Adrenal gland (tissue), 19 donors: ENCODE measurements at regions of chr19 and their contacts with region 1.

Region 1: GRCh38 chr19:33771384-33772101 is 25.1 kb upstream of the KCTD15 start:
- DNase-seq: peak; percentile 46 to 86 (median 74)
- H3K4me3 ChIP-seq: no peak overlapping the region
- H3K27ac ChIP-seq: no peak overlapping the region
- H3K4me1 ChIP-seq: no peaks in the 10 kb centered on the region
- H3K27me3 ChIP-seq: no peaks in the 10 kb centered on the region
- CTCF ChIP-seq: peak; percentile 71 to 92 (median 88)
- POLR2A ChIP-seq: no peak

Region 2: DNA sequence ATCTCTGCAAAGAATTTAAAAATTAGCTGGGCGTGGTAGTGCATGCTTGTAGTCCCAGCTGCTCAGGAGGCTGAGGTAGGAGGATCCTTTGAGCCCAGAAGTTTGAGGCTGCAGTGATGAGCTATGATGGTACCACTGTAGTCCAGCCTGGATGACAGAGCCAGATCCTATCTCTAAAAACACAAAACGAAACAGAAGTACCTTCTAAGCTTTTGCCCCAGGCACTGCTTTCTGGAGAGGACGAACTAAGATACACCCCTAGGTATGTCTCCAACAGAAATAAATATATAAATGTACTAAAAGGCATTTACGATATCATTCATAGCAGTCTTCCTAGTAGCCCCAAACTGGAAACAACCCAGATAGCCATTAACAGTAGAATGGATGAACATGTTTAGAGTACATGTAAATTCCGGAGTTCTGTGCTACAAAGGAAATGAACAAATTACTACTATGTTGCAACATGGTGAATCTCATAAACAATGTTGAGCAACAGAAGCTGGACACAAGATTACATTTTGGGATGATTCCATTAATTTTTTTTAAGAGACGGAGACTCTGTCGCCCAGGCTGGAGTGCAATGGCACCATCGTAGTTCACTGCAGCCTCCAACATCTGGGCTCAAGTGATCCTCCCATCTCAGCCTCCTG is 540.2 kb before region 1 on chr19:
- intact Hi-C with region 1: loop called in 1 of 2 experiments (anchors 5 kb)
- DNase-seq: no peak
- H3K4me3 ChIP-seq: no peak overlapping the region
- H3K27ac ChIP-seq: no peak overlapping the region
- H3K4me1 ChIP-seq: no peaks in the 10 kb centered on the region
- H3K27me3 ChIP-seq: peaks cover 13% of the 10 kb centered on the region
- CTCF ChIP-seq: no peak
- POLR2A ChIP-seq: no peak

Region 3: DNA sequence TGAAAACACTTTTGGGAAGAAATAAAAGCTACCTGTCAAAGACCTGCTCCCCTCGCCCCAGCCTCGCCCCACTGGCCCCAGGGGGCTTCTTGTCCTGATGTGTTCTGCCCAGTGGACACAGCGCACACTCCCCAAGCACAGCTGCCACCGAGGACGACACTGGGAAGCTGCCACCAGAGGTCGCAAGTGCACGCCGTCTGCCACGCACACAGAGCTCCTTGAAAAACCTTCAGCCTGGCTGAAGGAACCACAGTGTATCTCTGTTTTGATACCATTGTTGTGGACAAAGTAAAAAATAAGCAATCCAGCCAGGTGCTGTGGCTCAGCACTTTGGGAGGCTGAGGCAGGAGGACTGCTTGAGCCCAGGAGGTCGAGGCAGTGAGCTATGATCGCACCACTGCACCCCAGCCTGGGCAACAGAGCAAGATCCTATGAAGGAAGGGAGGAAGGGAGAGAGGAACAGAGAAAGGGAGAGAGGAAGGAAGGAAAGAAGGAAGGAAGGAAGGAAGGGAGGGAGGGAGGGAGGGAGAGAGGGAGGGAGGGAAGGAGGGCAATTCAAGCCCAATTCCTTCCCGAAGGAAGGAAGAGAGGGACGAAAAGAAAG is 340.8 kb before region 1 on chr19:
- intact Hi-C with region 1: loop called (anchors 2 to 5 kb)
- DNase-seq: peak; percentile 52 to 88 (median 70)
- H3K4me3 ChIP-seq: no peak overlapping the region
- H3K27ac ChIP-seq: no peak overlapping the region
- H3K4me1 ChIP-seq: no peaks in the 10 kb centered on the region
- H3K27me3 ChIP-seq: no peaks in the 10 kb centered on the region
- CTCF ChIP-seq: peak; percentile 62 to 80 (median 75)
- POLR2A ChIP-seq: no peak

Region 4: GRCh38 chr19:33720691-33721682 is 50.6 kb before region 1 on chr19:
- intact Hi-C with region 1: no loop called
- DNase-seq: no peak
- H3K4me3 ChIP-seq: no peak overlapping the region
- H3K27ac ChIP-seq: no peak overlapping the region
- H3K4me1 ChIP-seq: no peaks in the 10 kb centered on the region
- H3K27me3 ChIP-seq: no peaks in the 10 kb centered on the region
- CTCF ChIP-seq: no peak
- POLR2A ChIP-seq: no peak